ENCODE measurements at regions of chr3 and their contacts with region 1.

Region 1: GRCh38 chr3:84974347-84974746 is 15.6 kb downstream of the CADM2 start:
- DNase-seq: no peak
- H3K4me3 ChIP-seq: no peak overlapping the region
- H3K27ac ChIP-seq: no peak overlapping the region
- H3K4me1 ChIP-seq: no peaks in the 10 kb centered on the region
- H3K27me3 ChIP-seq: no peaks in the 10 kb centered on the region
- CTCF ChIP-seq: peak; percentile 49

Region 2: GRCh38 chr3:85360742-85361387 is 386.5 kb after region 1 on chr3:
- CTCF ChIA-PET with region 1: no interaction called
- POLR2A ChIA-PET with region 1: no interaction called
- intact Hi-C with region 1: loop called (anchors 1 kb)
- DNase-seq: peak in 1 of 2 experiments; percentile 55
- H3K4me3 ChIP-seq: no peak overlapping the region
- H3K27ac ChIP-seq: no peak overlapping the region
- H3K4me1 ChIP-seq: no peaks in the 10 kb centered on the region
- H3K27me3 ChIP-seq: no peaks in the 10 kb centered on the region
- CTCF ChIP-seq: peak; percentile 77